GM13976 (cell line): ENCODE measurements at regions of chr9 and their contacts with region 1.

Region 1: DNA sequence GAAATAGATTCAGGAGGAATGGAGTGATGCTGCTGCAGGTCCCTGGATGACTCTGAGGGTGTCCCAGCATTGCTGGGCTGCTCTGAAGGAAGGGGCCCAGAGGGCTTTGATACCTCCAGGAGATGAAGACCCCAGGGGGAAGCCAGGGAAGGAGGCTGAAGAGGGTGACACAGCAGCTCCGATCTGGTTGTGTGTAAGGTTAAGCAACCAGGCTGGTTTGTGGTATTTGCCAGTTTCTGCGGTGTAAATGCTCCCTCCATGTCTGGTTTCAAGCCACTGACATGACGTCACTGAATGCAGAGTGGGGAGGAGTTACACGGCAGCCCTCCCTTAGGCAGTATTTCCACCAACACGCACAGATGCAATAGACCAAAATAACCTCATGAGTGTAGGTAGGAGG is 40.0 kb upstream of the ORM1 start:
- DNase-seq: no peak
- CTCF ChIP-seq: no peak

Region 2: DNA sequence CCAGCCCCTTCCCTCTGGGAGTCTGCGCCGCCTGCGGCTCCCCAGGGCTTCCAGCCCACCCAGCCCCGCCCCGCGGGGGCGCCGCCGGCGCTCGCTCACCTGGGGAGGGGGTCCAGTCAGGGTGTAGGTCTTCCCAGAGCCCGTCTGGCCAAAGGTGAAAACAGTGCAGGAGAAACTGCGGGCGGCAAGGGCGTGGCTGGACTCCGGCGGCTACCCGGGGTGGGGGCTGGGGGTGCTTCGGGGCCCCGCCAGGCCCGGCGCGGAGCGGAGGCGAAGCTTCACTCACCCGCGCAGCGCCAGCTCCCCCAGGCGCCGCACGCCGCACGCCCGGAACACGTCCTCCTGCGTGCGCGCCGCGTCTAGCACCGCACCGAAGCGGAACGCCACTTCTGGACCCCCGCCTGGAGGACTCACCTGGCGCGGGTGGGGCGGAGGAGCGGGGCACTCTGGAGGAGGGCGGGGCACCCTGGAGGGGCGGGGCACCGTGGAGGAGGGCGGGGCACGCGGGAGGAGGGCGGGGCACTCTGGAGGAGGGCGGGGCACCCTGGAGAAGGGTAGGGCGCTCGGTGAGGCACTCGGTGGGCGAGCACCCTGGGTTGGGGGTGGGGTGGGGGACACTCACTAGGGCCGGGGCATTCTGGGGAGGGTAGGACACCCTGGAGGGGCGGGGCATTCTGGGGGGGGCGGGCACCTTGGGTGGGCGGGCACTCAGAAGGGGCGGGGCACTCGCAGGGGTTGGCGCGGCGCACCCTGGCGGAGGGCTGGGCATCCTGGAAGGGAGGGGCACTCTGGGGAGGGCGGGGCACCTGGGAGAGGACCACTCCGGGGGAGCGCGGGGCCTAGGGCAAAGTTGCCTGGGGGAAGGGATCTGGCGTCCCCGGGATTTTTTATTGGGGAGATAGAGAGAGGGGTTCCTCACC is 184.7 kb before region 1 on chr9:
- in situ Hi-C with region 1: loop called (anchors 10 kb)
- DNase-seq: no peak
- CTCF ChIP-seq: no peak

Region 3: GRCh38 chr9:114155263-114155972 is 127.5 kb before region 1 on chr9 and contains the start of gene COL27A1:
- in situ Hi-C with region 1: loop called (anchors 10 kb)
- DNase-seq: peak; percentile 93
- CTCF ChIP-seq: peak; percentile 93

Region 4: DNA sequence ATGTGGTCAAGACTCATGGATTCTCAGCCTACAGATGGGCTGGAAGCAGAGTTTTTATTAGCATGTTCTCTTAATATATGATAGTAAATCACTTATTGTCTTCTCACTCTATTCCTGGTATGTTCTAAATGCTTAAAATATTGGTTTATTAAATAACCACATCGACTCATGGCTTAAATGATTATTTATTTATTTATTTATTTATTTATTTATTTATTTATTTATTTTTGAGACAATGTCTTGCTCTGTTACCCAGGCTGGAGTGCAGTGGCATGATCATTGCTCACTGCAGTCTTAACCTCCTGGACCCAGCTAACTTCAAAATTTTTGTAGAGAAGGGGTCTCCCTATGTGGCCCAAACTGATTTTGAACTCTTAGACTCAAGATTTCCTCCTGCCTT is 1292.2 kb after region 1 on chr9:
- in situ Hi-C with region 1: no loop called
- DNase-seq: no peak
- CTCF ChIP-seq: no peak